Panc1 (cell line): ENCODE measurements at regions of chr4 and their contacts with region 1.

Region 1: DNA sequence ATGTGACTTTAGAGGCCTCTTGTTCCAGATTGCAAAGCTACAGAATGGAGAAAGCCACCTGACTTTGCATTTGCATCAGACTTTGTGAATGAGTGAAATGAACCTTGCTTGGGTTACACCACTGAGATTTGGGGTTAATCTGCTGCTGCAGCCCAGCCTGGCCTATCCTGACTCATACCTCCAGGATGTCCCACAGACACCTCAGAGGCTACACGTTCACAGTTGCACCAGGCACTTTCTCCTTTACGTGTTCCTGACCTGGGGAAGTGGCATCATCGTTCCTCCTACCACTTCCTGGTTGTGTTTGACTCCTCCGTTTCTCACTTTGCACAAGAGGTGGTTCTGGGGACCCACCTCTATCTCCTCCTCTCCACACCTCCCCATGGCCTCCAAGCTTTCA is 9.2 kb upstream of the SORCS2 start:
- DNase-seq: no peak
- ATAC-seq: no peak
- H3K4me3 ChIP-seq: no peak overlapping the region
- H3K27ac ChIP-seq: no peak overlapping the region
- H3K4me1 ChIP-seq: no peaks in the 10 kb centered on the region
- H3K27me3 ChIP-seq: no peaks in the 10 kb centered on the region
- CTCF ChIP-seq: no peak

Region 2: GRCh38 chr4:6960639-6961436 is 222.3 kb before region 1 on chr4:
- CTCF ChIA-PET with region 1: no interaction called
- POLR2A ChIA-PET with region 1: interaction called, 14 read pairs
- in situ Hi-C with region 1: no loop called
- intact Hi-C with region 1: no loop called
- DNase-seq: no peak
- ATAC-seq: no peak
- H3K4me3 ChIP-seq: no peak overlapping the region
- H3K27ac ChIP-seq: no peak overlapping the region
- H3K4me1 ChIP-seq: peaks cover 10% of the 10 kb centered on the region
- H3K27me3 ChIP-seq: no peaks in the 10 kb centered on the region
- CTCF ChIP-seq: no peak

Region 3: DNA sequence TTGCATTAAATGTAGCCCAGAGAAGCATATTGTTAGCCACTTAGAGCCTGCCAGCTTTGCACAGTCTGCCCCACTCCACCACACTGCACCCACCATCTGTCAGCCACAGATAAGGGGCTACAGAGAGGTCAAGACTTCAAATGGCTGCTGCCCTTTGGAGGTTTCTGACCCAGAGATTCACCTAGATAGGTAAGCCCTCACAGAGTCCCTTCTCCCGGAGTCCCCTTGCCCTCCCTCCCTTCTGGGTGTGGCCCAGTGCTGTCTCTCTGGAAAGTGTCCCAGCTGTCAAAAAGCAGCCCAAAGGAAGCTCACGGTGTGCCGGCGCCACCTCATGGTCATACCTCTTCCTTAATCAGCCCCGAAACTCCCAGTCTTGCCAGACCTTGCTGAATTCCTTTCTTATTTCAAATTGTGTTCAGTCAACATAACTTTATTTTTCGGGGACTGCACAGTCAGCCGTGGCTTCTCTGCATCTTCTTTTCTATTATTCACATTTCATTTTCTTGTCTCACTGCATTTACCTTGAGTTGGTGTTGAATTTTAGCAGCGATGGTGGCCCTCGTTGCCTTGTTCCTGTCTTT is 101.2 kb before region 1 on chr4:
- CTCF ChIA-PET with region 1: no interaction called
- POLR2A ChIA-PET with region 1: no interaction called
- in situ Hi-C with region 1: no loop called
- intact Hi-C with region 1: no loop called
- DNase-seq: no peak
- ATAC-seq: peak; percentile 92
- H3K4me3 ChIP-seq: no peak overlapping the region
- H3K27ac ChIP-seq: no peak overlapping the region
- H3K4me1 ChIP-seq: no peaks in the 10 kb centered on the region
- H3K27me3 ChIP-seq: no peaks in the 10 kb centered on the region
- CTCF ChIP-seq: peak; percentile 74

Region 4: GRCh38 chr4:7313347-7313811 is 130.2 kb after region 1 on chr4:
- CTCF ChIA-PET with region 1: no interaction called
- POLR2A ChIA-PET with region 1: no interaction called
- in situ Hi-C with region 1: no loop called
- intact Hi-C with region 1: no loop called
- DNase-seq: no peak
- ATAC-seq: no peak
- H3K4me3 ChIP-seq: no peak overlapping the region
- H3K27ac ChIP-seq: no peak overlapping the region
- H3K4me1 ChIP-seq: no peaks in the 10 kb centered on the region
- H3K27me3 ChIP-seq: no peaks in the 10 kb centered on the region
- CTCF ChIP-seq: no peak